HEK293 (cell line): ENCODE measurements at regions of chr1 and their contacts with region 1.

Region 1: GRCh38 chr1:150186789-150187559 is 37.3 kb downstream of the PLEKHO1 start:
- H3K4me3 ChIP-seq: no peak overlapping the region
- H3K27ac ChIP-seq: no peak overlapping the region
- H3K4me1 ChIP-seq: peaks cover 3% of the 10 kb centered on the region; the same call in 1 of the 2 replicates
- CTCF ChIP-seq: peak; percentile 27; the same call in 1 of the 2 replicates

Region 2: DNA sequence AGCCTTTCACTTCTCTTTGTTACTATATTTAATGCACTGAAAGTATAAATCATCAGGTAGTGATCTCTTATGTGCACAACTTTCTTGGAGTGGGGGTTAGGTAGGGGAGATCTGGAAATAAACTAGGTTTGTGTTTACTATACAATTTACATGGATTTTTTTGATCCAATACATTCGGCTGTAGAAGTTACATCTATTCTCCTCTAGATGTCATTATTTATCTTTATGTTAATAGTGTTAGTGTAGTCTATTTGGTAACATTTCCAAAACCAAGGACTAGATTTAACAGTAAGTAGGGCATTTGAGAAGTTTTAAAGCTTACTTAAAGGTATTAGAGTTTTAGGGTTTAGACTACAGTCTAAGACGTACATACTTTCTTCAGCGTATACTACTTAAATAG is 114.0 kb before region 1 on chr1:
- CTCF ChIA-PET with region 1: interaction called, 16 read pairs
- POLR2A ChIA-PET with region 1: interaction called, 3 read pairs
- H3K4me3 ChIP-seq: no peak overlapping the region
- H3K27ac ChIP-seq: no peak overlapping the region
- H3K4me1 ChIP-seq: no peaks in the 10 kb centered on the region
- CTCF ChIP-seq: no peak

Region 3: GRCh38 chr1:150127868-150128267 is 59.1 kb before region 1 on chr1:
- CTCF ChIA-PET with region 1: interaction called, 10 read pairs
- POLR2A ChIA-PET with region 1: no interaction called
- H3K4me3 ChIP-seq: no peak overlapping the region
- H3K27ac ChIP-seq: no peak overlapping the region
- H3K4me1 ChIP-seq: no peaks in the 10 kb centered on the region
- CTCF ChIP-seq: no peak

Region 4: DNA sequence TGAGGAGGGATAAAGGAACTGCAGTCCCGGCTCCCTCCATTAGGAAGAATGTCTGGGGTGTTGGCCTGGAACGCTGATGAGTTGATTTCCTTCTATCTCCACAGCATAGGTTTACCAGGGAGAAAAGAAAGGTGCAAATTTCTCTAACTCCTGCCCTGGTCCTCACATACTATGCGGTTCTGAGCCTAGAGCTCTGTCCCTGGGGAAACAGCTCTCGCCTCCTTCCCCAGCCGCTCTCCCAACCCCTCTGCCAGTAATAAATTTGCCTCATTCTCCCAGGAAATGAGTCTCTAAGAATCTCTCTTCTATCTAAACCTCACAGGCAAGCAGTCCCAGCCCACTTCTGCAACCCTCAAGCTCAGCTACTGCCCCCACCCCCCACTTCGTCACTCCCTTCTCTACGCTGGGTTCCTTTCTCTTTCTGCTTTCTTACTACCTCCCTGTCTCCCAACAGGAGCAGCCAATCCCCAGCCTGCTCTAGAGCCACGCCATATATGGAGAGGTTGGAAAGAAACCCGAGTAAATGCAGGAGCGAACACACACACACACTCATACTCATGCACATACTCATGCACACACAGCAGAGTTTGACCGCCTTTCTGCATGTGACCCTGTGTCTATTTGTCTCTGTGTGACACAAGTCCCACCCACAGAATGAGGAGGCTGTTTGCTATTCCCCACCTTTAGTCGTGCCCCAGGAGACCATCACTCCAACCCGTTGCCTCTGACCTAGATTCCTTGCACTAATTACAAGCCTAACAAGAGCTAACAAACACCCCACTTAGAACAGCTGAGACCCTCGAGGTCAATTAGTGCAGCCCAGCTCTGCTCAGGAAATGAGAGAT is 23.9 kb before region 1 on chr1:
- CTCF ChIA-PET with region 1: interaction called, 12 read pairs
- POLR2A ChIA-PET with region 1: no interaction called
- H3K4me3 ChIP-seq: no peak overlapping the region
- H3K27ac ChIP-seq: peak overlapping the region; percentile 28
- H3K4me1 ChIP-seq: no peaks in the 10 kb centered on the region
- CTCF ChIP-seq: no peak

Region 5: DNA sequence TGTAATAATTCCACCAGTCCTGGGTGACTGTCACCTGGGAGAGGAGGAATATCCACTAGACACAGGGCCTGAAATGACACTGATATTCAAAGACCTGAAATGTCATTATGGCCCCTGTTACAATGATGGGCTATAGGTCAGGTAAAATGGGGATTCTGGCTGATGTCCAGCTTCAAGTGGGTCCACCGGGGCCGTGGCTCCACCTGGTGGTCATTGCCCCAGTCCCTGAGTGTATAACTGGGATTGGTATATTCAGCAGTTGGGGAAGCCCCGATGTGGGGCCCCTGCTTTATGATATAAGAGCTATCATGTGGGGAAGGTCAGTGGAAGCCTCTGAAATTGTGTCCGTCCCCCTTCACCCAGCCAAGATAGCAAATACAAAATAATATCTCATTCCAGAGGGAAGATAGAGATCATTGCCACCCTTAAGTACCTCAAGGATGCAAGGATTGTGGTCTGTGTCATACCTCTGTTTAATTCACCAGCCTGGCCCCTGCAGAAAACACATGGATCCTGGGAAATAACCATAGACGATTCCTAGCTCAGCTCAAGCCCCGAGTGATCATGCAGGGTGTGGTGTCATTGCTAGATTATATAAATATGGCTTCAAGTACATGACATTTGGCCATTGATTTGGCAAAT is 17.9 kb before region 1 on chr1:
- CTCF ChIA-PET with region 1: interaction called, 29 read pairs
- POLR2A ChIA-PET with region 1: no interaction called
- H3K4me3 ChIP-seq: no peak overlapping the region
- H3K27ac ChIP-seq: no peak overlapping the region
- H3K4me1 ChIP-seq: no peaks in the 10 kb centered on the region
- CTCF ChIP-seq: peak; percentile 67

Region 6: DNA sequence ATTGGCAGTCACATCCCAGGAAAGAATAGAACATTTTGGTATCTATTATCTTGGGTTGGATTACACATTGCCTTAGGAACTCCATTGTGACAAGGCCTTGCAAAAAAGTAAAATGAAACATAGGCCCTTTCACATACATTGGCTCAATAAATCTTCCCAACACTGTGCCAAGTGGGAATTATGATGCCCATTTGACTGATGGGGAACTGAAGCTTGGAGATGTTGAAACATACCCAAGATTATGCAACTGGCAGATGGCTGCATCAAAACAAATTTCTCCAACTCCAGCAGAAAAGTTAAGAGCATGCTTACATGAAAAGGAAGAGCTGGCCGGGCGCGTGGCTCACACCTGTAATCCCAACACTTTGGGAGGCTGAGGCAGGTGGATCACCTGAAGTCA is 10.4 kb before region 1 on chr1:
- CTCF ChIA-PET with region 1: interaction called, 29 read pairs
- POLR2A ChIA-PET with region 1: no interaction called
- H3K4me3 ChIP-seq: no peak overlapping the region
- H3K27ac ChIP-seq: no peak overlapping the region
- H3K4me1 ChIP-seq: no peaks in the 10 kb centered on the region
- CTCF ChIP-seq: no peak